ENCODE measurements at regions of chr6 and their contacts with region 1.

Region 1: GRCh38 chr6:111541026-111541681 is 58.1 kb upstream of the REV3L start:
- DNase-seq: no peak
- ATAC-seq: peak; percentile 32

Region 2: GRCh38 chr6:111483736-111484632 is 57.2 kb before region 1 on chr6:
- intact Hi-C with region 1: loop called (anchors 10 kb)
- DNase-seq: peak; percentile 95
- ATAC-seq: peak; percentile 89

Measured in left ventricle myocardium superior (tissue), 1 donor.